ENCODE measurements at regions of chr5 and their contacts with region 1.

Region 1: GRCh38 chr5:37730896-37731455 is 108.9 kb downstream of the GDNF start:
- DNase-seq: no peak
- H3K4me3 ChIP-seq: no peak overlapping the region
- H3K4me3 Mint-ChIP-seq: no peak overlapping the region
- H3K27ac Mint-ChIP-seq: no peak overlapping the region
- H3K4me1 ChIP-seq: no peaks in the 10 kb centered on the region
- H3K4me1 Mint-ChIP-seq: no peaks in the 10 kb centered on the region
- H3K27me3 ChIP-seq: no peaks in the 10 kb centered on the region
- H3K27me3 Mint-ChIP-seq: no peaks in the 10 kb centered on the region
- CTCF ChIP-seq: no peak

Region 2: DNA sequence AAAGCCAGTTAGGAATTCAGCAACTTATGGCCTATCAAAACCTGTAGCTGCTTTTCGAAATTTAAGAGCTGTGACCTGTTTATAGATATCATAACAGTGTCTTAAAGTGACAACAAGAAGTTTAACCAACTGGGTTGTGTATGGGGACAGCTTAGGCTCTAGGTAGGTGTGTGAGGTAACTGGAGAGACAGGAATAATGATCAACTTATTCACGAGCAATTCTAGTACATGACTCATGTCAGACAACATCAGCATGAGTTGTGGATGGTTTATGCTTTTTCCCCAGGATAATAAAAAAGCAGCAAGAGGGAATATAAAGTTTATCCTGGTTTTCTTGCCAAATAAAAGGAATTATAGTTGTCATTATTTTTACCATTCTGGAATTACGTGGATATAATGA is 20.3 kb after region 1 on chr5:
- CTCF ChIA-PET with region 1: no interaction called
- POLR2A ChIA-PET with region 1: no interaction called
- intact Hi-C with region 1: loop called (anchors 1 kb)
- DNase-seq: no peak
- H3K4me3 ChIP-seq: no peak overlapping the region
- H3K4me3 Mint-ChIP-seq: no peak overlapping the region
- H3K27ac Mint-ChIP-seq: no peak overlapping the region
- H3K4me1 ChIP-seq: no peaks in the 10 kb centered on the region; the same call in 1 of the 2 replicates
- H3K4me1 Mint-ChIP-seq: no peaks in the 10 kb centered on the region
- H3K27me3 ChIP-seq: no peaks in the 10 kb centered on the region
- H3K27me3 Mint-ChIP-seq: no peaks in the 10 kb centered on the region
- CTCF ChIP-seq: no peak

Region 3: GRCh38 chr5:37814699-37815098 is 83.7 kb after region 1 on chr5:
- CTCF ChIA-PET with region 1: no interaction called
- POLR2A ChIA-PET with region 1: no interaction called
- intact Hi-C with region 1: no loop called
- DNase-seq: no peak
- H3K4me3 ChIP-seq: no peak overlapping the region
- H3K4me3 Mint-ChIP-seq: no peak overlapping the region
- H3K27ac Mint-ChIP-seq: no peak overlapping the region
- H3K4me1 ChIP-seq: no peaks in the 10 kb centered on the region
- H3K4me1 Mint-ChIP-seq: no peaks in the 10 kb centered on the region
- H3K27me3 ChIP-seq: no peaks in the 10 kb centered on the region
- H3K27me3 Mint-ChIP-seq: peaks cover 3% of the 10 kb centered on the region
- CTCF ChIP-seq: no peak

Measured in Caco-2 (cell line).